Dendritic cell treated with granulocyte-macrophage colony-stimulating factor and Interleukin-4, amounts not matched to agents 40 ng/mL and 50 ng/mL, for 4 days (primary cell): ENCODE measurements at regions of chr14 and their contacts with region 1.

Region 1: GRCh38 chr14:21437063-21437901 is 18.6 kb downstream of the CHD8 start:
- H3K4me3 Mint-ChIP-seq: peak overlapping the region; percentile 91
- H3K27ac Mint-ChIP-seq: peak overlapping the region; percentile 89
- H3K4me1 Mint-ChIP-seq: peaks cover 69% of the 10 kb centered on the region
- H3K27me3 Mint-ChIP-seq: no peaks in the 10 kb centered on the region

Region 2: DNA sequence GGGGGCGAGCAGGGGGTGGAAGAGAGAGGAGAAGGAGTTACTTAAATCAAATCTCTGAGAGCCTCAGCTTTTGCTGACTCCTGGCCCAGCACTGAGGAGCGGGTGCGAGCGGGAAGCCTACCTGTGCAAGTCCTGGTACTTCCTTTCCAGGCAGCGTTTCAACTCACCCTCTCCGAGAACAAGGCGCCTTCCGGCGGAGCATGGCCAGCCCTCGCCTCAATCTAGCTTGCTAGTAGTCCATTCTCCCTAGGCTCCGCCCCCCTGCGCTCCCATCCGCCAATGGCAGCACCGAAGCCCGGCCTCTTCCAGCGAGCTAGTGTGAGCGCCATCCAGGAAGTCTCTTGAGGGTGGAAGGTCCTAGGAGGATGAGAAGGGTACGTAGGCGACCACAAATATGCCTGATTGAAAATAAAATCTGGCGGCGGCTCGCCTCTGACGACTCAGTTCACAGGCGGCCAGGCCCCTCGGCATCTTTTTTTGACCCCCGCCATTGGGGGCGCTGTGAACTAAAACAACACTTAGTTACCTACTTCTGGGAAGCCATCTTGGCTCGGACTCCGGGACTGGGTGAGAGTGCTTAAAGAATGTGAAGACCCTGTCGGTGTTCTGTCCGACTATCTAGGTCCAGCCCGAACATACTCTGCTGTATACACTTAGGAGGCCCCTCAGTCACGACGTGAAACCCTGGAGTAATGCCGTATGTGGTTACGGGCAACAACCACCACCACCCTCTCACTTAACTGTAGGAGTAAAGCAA is 18.8 kb after region 1 on chr14 and contains the start of gene CHD8:
- intact Hi-C with region 1: loop called (anchors 1 kb)
- H3K4me3 Mint-ChIP-seq: peak within 1 kb of the TSS; percentile 90
- H3K27ac Mint-ChIP-seq: peak within 1 kb of the TSS; percentile 97
- H3K4me1 Mint-ChIP-seq: peaks cover 24% of the 10 kb centered on the region
- H3K27me3 Mint-ChIP-seq: no peaks in the 10 kb centered on the region

Region 3: DNA sequence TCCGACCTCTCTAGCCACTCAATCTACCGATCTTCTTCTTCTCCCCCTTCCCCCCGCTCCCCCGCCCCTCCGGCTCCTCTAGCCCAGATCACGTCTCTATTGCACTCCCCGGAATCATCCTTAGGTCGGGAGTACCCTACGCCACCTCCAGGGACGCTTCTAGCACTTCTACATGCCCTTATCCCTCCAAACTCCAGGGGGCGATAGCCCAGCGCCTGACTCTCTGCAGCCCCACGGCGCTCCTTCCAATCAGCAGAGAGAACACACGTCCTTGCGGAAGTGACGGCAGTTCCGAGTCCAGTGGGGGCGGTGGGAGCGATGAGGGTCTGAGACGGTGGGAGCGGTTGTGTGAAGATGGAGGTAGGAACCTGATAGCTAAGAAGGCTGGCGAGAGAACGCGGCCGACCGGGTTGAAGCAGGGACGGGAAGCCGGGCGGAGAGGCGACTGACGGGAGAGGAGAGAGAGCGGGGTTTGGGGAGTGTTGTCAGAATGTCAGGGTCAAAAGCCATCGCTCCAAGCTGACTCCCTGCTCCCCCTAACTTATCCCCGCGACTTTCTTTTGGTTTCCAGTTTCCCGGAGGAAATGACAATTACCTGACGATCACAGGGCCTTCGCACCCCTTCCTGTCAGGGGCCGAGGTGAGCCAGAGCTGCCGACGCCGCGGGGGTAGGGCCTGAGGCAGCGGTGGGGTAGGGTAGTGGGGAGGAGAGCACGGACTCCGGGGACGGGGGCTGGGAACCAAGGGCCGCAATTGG is 39.8 kb after region 1 on chr14 and contains the starts of genes RAB2B and TOX4:
- intact Hi-C with region 1: loop called (anchors 2 kb)
- H3K4me3 Mint-ChIP-seq: peak within 1 kb of the TSS; percentile 100
- H3K27ac Mint-ChIP-seq: peak within 1 kb of the TSS; percentile 99
- H3K4me1 Mint-ChIP-seq: peaks cover 27% of the 10 kb centered on the region
- H3K27me3 Mint-ChIP-seq: no peaks in the 10 kb centered on the region

Region 4: GRCh38 chr14:21510735-21511657 is 73.7 kb after region 1 on chr14 and contains the start of gene METTL3:
- intact Hi-C with region 1: loop called (anchors 1 kb)
- H3K4me3 Mint-ChIP-seq: peak within 1 kb of the TSS; percentile 87
- H3K27ac Mint-ChIP-seq: peak within 1 kb of the TSS; percentile 95
- H3K4me1 Mint-ChIP-seq: peaks cover 18% of the 10 kb centered on the region
- H3K27me3 Mint-ChIP-seq: peaks cover 13% of the 10 kb centered on the region